MCF 10A (cell line): ENCODE measurements at regions of chr20 and their contacts with region 1.

Region 1: GRCh38 chr20:3811467-3812258 is 8.7 kb upstream of the AP5S1 start:
- DNase-seq: peak; percentile 99
- H3K4me3 Mint-ChIP-seq: peak overlapping the region; percentile 83
- H3K27ac Mint-ChIP-seq: peak overlapping the region; percentile 95
- H3K4me1 Mint-ChIP-seq: peaks cover 33% of the 10 kb centered on the region
- H3K27me3 Mint-ChIP-seq: no peaks in the 10 kb centered on the region
- CTCF ChIP-seq: no peak

Region 2: GRCh38 chr20:3795511-3796468 is 15.9 kb before region 1 on chr20 and contains the start of gene CDC25B:
- CTCF ChIA-PET with region 1: interaction called, 231 read pairs
- POLR2A ChIA-PET with region 1: no interaction called
- intact Hi-C with region 1: loop called (anchors 1 kb)
- DNase-seq: peak; percentile 95
- H3K4me3 Mint-ChIP-seq: peak within 1 kb of the TSS; percentile 97
- H3K27ac Mint-ChIP-seq: peak within 1 kb of the TSS; percentile 94
- H3K4me1 Mint-ChIP-seq: peaks cover 25% of the 10 kb centered on the region
- H3K27me3 Mint-ChIP-seq: no peaks in the 10 kb centered on the region
- CTCF ChIP-seq: peak; percentile 45
- total RNA-seq, gene CDC25B: 134 and 137 TPM in 2 replicates

Region 3: GRCh38 chr20:3846740-3847428 is 35.2 kb after region 1 on chr20 and contains the start of gene MAVS:
- CTCF ChIA-PET with region 1: interaction called, 3 read pairs
- POLR2A ChIA-PET with region 1: interaction called, 16 read pairs
- intact Hi-C with region 1: no loop called
- DNase-seq: peak; percentile 86
- H3K4me3 Mint-ChIP-seq: peak within 1 kb of the TSS; percentile 83
- H3K27ac Mint-ChIP-seq: peak within 1 kb of the TSS; percentile 83
- H3K4me1 Mint-ChIP-seq: peaks cover 13% of the 10 kb centered on the region
- H3K27me3 Mint-ChIP-seq: no peaks in the 10 kb centered on the region
- CTCF ChIP-seq: no peak
- total RNA-seq, gene MAVS: 31.7 and 39.7 TPM in 2 replicates